Natural killer cell (primary cell): ENCODE measurements at regions of chr15 and their contacts with region 1.

Region 1: GRCh38 chr15:22253676-22254408 is 173.5 kb downstream of the OR4M2 start:
- DNase-seq: peak; percentile 55 to 72
- ATAC-seq: peak; percentile 70 to 83 (median 78)
- H3K4me3 ChIP-seq: no peak overlapping the region
- H3K4me3 Mint-ChIP-seq: peak overlapping the region; percentile 68
- H3K27ac ChIP-seq: peak overlapping the region; percentile 39
- H3K27ac Mint-ChIP-seq: peak overlapping the region; percentile 80 to 85
- H3K4me1 ChIP-seq: peaks cover 47% of the 10 kb centered on the region
- H3K4me1 Mint-ChIP-seq: peaks cover 31 to 79% of the 10 kb centered on the region in 2 donors
- H3K27me3 ChIP-seq: peaks cover 4% of the 10 kb centered on the region
- H3K27me3 Mint-ChIP-seq: no peaks in the 10 kb centered on the region
- CTCF ChIP-seq: no peak

Region 2: DNA sequence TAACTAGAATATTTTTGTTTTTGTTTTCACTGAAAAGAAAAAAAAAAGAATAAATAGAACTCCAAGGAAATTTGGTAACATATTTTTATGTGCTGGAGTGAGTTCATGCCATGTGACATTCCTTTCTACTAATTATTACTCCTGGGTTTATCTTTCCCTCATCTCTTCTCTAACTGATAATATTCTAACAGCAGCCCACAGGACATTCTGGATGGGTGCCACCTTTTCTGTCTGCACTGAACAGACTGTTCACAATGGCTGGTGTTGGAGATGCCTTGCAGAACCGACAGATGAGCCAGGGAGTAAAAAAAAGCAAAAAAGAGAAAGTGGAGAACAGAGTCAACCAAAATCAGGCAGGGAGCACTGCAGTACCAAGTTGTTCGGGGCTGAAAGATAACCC is 22.2 kb before region 1 on chr15:
- intact Hi-C with region 1: loop called (anchors 2 kb)
- DNase-seq: no peak
- ATAC-seq: no peak
- H3K4me3 ChIP-seq: no peak overlapping the region
- H3K4me3 Mint-ChIP-seq: no peak overlapping the region
- H3K27ac ChIP-seq: no peak overlapping the region
- H3K27ac Mint-ChIP-seq: no peak overlapping the region
- H3K4me1 ChIP-seq: no peaks in the 10 kb centered on the region
- H3K4me1 Mint-ChIP-seq: peaks cover 0 to 24% of the 10 kb centered on the region in 2 donors
- H3K27me3 ChIP-seq: no peaks in the 10 kb centered on the region
- H3K27me3 Mint-ChIP-seq: no peaks in the 10 kb centered on the region
- CTCF ChIP-seq: no peak

Region 3: DNA sequence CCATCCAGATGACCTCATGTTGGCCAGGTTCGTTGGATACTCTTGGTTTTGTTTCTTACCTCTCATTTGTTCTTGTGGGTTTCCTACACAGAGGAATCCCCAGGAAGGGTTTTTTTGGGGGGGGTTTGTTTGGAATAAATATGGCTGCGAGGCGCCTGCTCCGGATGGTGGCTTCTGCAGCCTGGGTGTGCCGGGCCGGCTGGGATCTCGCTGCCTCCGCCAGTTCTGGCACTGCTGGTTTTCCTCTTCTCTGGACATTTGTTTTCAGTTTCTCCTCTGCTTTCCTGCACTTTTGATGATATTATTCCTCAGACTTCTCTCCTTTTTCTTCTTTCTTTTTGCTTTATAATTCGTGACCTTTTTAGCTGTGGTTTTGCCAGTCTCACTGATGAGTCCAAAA is 13.9 kb after region 1 on chr15:
- intact Hi-C with region 1: loop called (anchors 1 kb)
- DNase-seq: peak in 1 of 2 donors; percentile 14
- ATAC-seq: no peak
- H3K4me3 ChIP-seq: no peak overlapping the region
- H3K4me3 Mint-ChIP-seq: no peak overlapping the region
- H3K27ac ChIP-seq: no peak overlapping the region
- H3K27ac Mint-ChIP-seq: no peak overlapping the region
- H3K4me1 ChIP-seq: peaks cover 36% of the 10 kb centered on the region
- H3K4me1 Mint-ChIP-seq: no peaks in the 10 kb centered on the region
- H3K27me3 ChIP-seq: no peaks in the 10 kb centered on the region
- H3K27me3 Mint-ChIP-seq: no peaks in the 10 kb centered on the region
- CTCF ChIP-seq: no peak

Region 4: DNA sequence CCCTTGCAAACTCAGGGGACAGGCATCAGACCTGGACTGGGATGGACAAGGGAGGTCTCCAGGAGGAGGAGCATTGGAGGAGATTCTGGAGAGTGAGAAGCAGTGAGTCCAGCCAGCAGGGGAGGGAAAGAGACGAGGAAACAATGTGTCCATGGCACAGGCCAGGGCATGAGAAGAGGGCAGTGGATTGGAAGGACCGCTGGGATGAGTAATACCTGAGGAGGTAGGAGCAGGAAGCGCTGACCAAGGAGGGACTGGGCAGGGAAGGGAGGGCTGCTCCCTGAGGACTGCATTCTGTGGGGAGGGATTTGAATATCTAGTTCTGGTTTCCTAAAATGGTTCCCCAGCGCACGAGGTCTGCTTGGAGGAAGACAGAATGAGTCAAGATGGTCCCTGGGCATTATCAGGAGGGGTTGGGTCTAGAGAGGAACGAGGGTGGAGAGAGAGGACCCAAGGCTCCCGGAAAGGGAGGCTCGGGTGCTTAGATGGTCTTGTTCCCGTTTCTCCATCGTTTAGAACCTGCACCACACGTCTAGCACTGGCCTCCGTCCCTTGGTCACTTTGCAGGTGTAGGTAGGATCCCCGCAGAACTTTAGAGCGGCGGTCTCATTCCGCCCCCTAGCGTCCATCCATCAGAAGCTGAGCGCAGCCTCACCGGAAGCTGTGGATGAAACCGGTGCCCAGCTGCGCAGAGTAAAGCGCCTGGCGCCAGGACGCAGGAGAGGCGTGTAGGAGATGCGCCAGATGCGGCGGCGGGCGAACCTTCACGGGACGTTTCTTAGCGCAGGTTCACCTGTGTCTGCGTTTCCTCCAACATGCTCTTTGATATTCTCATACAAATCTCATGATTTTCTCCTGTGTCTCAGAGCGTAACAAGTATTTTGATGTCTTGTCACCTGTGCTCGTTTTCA is 1623.9 kb after region 1 on chr15:
- intact Hi-C with region 1: no loop called
- DNase-seq: no peak
- ATAC-seq: no peak
- H3K4me3 ChIP-seq: no peak overlapping the region
- H3K4me3 Mint-ChIP-seq: no peak overlapping the region
- H3K27ac ChIP-seq: no peak overlapping the region
- H3K27ac Mint-ChIP-seq: no peak overlapping the region
- H3K4me1 ChIP-seq: no peaks in the 10 kb centered on the region
- H3K4me1 Mint-ChIP-seq: no peaks in the 10 kb centered on the region
- H3K27me3 ChIP-seq: no peaks in the 10 kb centered on the region
- H3K27me3 Mint-ChIP-seq: no peaks in the 10 kb centered on the region
- CTCF ChIP-seq: no peak